GM10248 (cell line): ENCODE measurements at regions of chr9 and their contacts with region 1.

Region 1: GRCh38 chr9:93668261-93668871 is 92.0 kb downstream of the PHF2 start:
- DNase-seq: no peak
- CTCF ChIP-seq: no peak

Region 2: GRCh38 chr9:93657331-93658111 is 10.8 kb before region 1 on chr9:
- CTCF ChIA-PET with region 1: interaction called, 4 read pairs
- POLR2A ChIA-PET with region 1: interaction called, 16 read pairs
- DNase-seq: no peak
- CTCF ChIP-seq: no peak

Region 3: GRCh38 chr9:93730217-93730616 is 61.9 kb after region 1 on chr9:
- CTCF ChIA-PET with region 1: no interaction called
- POLR2A ChIA-PET with region 1: no interaction called
- DNase-seq: no peak
- CTCF ChIP-seq: no peak

Region 4: DNA sequence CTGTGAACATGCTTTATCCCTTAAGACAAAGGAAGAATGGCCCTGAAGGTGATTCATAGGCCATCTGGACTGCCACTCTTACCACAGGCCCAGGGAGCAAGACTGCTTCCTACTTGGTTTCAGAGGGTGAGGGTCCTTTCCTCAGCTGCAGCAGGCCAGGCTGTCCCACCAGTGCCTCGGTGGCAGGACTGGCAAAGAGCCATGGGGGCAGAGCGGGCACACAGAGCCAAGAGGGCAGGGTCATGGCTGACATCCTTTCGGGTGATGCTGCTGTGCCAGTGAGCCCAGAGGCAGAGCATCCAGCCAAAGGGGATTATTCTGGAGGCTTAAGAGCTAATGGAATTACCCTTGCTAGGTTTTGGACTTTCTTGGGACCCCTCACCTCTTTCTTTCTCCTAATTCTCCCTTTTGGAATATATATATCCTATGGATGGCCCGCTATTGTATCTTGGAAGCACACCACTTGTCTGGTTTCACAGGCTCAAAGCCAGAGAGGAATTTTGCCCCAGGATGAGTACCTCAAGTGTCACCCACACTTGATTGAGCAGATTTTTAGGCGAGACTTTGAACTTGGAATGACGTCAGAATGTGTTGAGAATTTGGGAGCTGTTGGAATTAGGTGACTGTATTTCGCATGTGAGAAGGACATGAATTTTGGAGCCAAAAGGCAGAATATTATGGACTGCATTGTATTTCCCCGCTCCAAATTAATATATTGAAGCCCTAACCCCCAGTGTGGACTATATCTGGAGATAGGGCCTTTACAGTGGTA is 106.2 kb after region 1 on chr9:
- CTCF ChIA-PET with region 1: no interaction called
- POLR2A ChIA-PET with region 1: no interaction called
- DNase-seq: no peak
- CTCF ChIP-seq: no peak